Activated B cell treated with CpG ODN at 0.5 μM for 24 hours (primary cell): ENCODE measurements at regions of chr12 and their contacts with region 1.

Region 1: GRCh38 chr12:89461649-89462612 is 62.7 kb downstream of the GALNT4 start:
- DNase-seq: no peak
- ATAC-seq: peak; percentile 77
- H3K4me3 Mint-ChIP-seq: peak overlapping the region; percentile 41
- H3K27ac Mint-ChIP-seq: no peak overlapping the region
- H3K4me1 Mint-ChIP-seq: peaks cover 16% of the 10 kb centered on the region
- H3K27me3 Mint-ChIP-seq: no peaks in the 10 kb centered on the region
- CTCF ChIP-seq: peak; percentile 28

Region 2: DNA sequence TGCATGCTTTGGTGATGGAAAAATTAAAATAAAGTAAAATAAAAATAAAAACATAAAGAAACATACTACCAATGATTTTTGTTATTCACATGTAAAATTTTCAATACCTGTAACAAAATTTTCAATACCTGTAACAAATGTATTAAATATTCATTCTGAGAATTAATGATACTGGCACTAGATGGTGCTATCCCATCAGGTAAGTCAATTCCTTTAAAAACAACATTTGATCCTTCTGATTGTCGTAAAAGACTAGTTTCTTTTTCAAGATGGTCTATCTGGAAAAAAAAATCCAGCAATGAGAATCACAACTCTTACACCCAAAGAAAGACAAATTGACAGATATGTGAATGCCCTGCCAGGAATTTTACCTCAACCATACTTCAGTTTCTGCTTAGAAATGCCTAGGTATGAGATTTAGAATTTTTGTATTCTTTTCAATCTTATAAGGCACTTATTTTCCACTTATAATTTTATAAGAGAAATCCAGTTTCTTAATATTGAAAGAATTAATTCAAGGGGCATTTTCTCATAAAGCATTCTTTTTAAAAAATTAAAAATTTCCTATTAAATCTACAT is 1350.8 kb before region 1 on chr12:
- CTCF ChIA-PET with region 1: no interaction called
- POLR2A ChIA-PET with region 1: no interaction called
- intact Hi-C with region 1: loop called (anchors 5 kb)
- DNase-seq: no peak
- ATAC-seq: no peak
- H3K4me3 Mint-ChIP-seq: no peak overlapping the region
- H3K27ac Mint-ChIP-seq: no peak overlapping the region
- H3K4me1 Mint-ChIP-seq: no peaks in the 10 kb centered on the region
- H3K27me3 Mint-ChIP-seq: no peaks in the 10 kb centered on the region
- CTCF ChIP-seq: no peak

Region 3: GRCh38 chr12:89352492-89353187 is 109.3 kb before region 1 on chr12 and contains the start of gene DUSP6:
- CTCF ChIA-PET with region 1: interaction called, 5 read pairs
- POLR2A ChIA-PET with region 1: no interaction called
- intact Hi-C with region 1: loop called (anchors 2 kb)
- DNase-seq: peak; percentile 62
- ATAC-seq: peak; percentile 61
- H3K4me3 Mint-ChIP-seq: peak within 1 kb of the TSS; percentile 84
- H3K27ac Mint-ChIP-seq: peak within 1 kb of the TSS; percentile 82
- H3K4me1 Mint-ChIP-seq: peaks cover 62% of the 10 kb centered on the region
- H3K27me3 Mint-ChIP-seq: no peaks in the 10 kb centered on the region
- CTCF ChIP-seq: no peak
- total RNA-seq, gene DUSP6: 1.6 and 1.8 TPM in 2 replicates

Region 4: GRCh38 chr12:89494411-89495231 is 32.7 kb after region 1 on chr12:
- CTCF ChIA-PET with region 1: no interaction called
- POLR2A ChIA-PET with region 1: no interaction called
- intact Hi-C with region 1: no loop called
- DNase-seq: no peak
- ATAC-seq: peak; percentile 70
- H3K4me3 Mint-ChIP-seq: peak overlapping the region; percentile 3
- H3K27ac Mint-ChIP-seq: peak overlapping the region; percentile 65
- H3K4me1 Mint-ChIP-seq: peaks cover 37% of the 10 kb centered on the region
- H3K27me3 Mint-ChIP-seq: no peaks in the 10 kb centered on the region
- CTCF ChIP-seq: no peak

Region 5: GRCh38 chr12:89529738-89530137 is 67.8 kb after region 1 on chr12:
- CTCF ChIA-PET with region 1: interaction called, 13 read pairs
- POLR2A ChIA-PET with region 1: no interaction called
- intact Hi-C with region 1: no loop called
- DNase-seq: no peak
- ATAC-seq: peak; percentile 18
- H3K4me3 Mint-ChIP-seq: no peak overlapping the region
- H3K27ac Mint-ChIP-seq: peak overlapping the region; percentile 9
- H3K4me1 Mint-ChIP-seq: peaks cover 21% of the 10 kb centered on the region
- H3K27me3 Mint-ChIP-seq: no peaks in the 10 kb centered on the region
- CTCF ChIP-seq: peak; percentile 15